ENCODE measurements at regions of chr10 and their contacts with region 1.

Region 1: GRCh38 chr10:122565728-122566206 is 5.2 kb downstream of the DMBT1 start:
- DNase-seq: peak; percentile 93
- H3K4me3 Mint-ChIP-seq: peak overlapping the region; percentile 68
- H3K27ac Mint-ChIP-seq: no peak overlapping the region
- H3K4me1 Mint-ChIP-seq: peaks cover 12% of the 10 kb centered on the region
- H3K27me3 Mint-ChIP-seq: no peaks in the 10 kb centered on the region
- CTCF ChIP-seq: peak; percentile 83

Region 2: GRCh38 chr10:122298598-122299301 is 267.0 kb before region 1 on chr10:
- CTCF ChIA-PET with region 1: interaction called, 25 read pairs
- POLR2A ChIA-PET with region 1: interaction called, 4 read pairs
- intact Hi-C with region 1: loop called (anchors 1 kb)
- DNase-seq: peak; percentile 86
- H3K4me3 Mint-ChIP-seq: no peak overlapping the region
- H3K27ac Mint-ChIP-seq: no peak overlapping the region
- H3K4me1 Mint-ChIP-seq: peaks cover 38% of the 10 kb centered on the region
- H3K27me3 Mint-ChIP-seq: no peaks in the 10 kb centered on the region
- CTCF ChIP-seq: peak; percentile 82

Region 3: DNA sequence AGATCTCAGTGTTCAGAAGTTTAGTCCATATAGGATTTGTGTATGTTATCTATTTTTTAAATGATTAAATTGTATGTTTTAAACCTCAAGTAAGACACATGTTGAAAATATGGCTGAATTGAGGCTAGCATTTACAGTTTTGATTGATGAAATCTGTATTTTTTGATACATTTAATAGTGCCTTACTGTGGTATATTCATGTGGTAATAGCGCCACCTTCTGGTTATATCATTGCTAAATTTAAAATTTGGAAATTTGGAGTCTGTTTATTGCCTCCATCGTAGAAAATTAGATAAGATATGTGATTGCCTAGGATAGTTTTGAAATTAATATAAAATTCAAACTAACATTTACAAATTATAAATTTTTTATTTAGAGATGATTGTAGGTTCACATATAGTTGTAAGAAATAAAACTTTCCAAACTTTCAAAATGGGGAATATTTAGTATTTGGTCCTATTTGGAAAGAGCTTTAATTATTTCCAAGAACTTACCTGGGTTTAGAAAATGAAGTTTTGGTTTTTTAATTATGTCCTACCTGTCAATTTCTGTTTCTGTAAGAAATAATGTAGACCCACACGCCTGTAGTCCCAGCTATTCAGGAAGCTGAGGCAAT is 130.4 kb before region 1 on chr10:
- CTCF ChIA-PET with region 1: interaction called, 23 read pairs
- POLR2A ChIA-PET with region 1: interaction called, 3 read pairs
- intact Hi-C with region 1: loop called (anchors 1 kb)
- DNase-seq: peak; percentile 55
- H3K4me3 Mint-ChIP-seq: no peak overlapping the region
- H3K27ac Mint-ChIP-seq: no peak overlapping the region
- H3K4me1 Mint-ChIP-seq: no peaks in the 10 kb centered on the region
- H3K27me3 Mint-ChIP-seq: no peaks in the 10 kb centered on the region
- CTCF ChIP-seq: peak; percentile 51

Region 4: DNA sequence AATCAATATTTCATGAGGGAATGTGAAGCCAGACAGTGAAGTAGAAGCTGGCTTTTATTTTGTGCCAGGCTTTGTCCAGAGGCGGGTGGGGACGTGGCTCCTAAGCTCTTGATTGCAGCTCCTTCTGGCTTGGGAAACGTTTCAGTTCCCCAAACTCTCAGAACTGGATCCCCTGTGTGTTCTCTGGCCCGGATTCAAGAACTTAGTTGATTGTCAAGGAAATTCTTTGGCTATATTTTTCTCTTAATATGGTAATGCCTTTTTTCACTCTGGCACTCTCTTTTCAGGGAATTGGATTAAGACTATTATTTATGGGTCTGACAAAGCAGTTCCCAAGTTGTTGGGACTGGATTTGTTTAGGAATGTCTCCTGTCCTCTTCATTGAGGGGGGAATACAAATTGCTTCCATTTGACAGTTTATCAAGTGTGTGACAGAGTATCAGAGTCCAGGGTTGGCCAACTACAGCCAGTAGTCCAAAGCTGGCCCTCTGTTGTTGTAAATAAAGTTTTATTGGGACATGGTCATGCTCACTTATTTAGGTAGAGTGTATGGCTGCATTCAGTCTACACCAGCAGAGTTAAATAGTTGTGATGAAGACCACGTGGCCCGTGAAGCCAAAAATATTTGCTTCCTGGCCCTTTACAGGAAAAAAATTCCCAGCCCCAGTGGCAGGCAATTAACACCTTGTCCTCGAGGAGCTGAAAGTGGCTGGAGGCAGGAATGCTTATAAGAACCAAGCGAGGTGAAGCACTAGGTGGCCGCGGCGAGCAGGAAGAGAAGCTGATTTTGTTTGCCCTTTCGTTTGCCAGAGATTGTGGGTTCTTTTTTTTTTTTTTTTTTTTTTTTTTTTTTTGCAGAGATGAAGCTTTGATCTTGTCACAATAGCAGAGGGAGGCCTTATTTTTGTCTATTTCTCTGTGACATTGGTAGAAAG is 70.1 kb before region 1 on chr10:
- CTCF ChIA-PET with region 1: interaction called, 24 read pairs
- POLR2A ChIA-PET with region 1: interaction called, 5 read pairs
- intact Hi-C with region 1: no loop called
- DNase-seq: peak; percentile 77
- H3K4me3 Mint-ChIP-seq: peak overlapping the region; percentile 60
- H3K27ac Mint-ChIP-seq: peak overlapping the region; percentile 92
- H3K4me1 Mint-ChIP-seq: peaks cover 71% of the 10 kb centered on the region
- H3K27me3 Mint-ChIP-seq: no peaks in the 10 kb centered on the region
- CTCF ChIP-seq: no peak

Region 5: DNA sequence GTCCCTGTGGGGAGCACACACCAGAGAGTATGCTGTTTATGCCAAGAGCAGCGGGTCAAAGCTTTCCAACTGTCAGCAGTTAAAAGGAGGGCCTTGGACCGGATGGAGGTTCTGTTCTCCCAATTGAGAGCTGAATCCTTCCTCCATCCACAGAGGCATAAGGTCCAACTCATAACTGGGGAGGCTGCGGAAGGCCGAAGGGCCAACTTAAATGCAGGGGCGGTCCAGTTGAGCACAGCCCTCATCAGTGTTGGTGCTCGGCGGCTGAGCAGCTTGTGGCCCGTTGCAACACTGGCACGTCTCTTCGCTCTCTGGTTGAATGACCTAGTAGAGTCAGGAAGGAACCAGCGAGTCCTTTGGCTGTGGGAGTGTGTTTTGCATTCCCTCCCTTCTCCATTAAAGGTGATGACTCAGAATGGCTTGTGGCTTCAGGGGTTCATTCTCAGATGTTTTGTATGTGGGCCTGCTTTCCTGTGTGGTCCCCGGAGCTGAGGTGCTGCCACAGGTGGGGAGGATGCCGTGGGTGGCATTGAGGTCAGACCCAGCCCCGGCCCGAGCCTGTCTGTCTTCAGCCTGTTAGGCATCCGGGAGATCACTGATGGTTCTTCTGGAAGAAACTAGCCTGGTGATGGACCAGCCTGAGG is 50.1 kb before region 1 on chr10:
- CTCF ChIA-PET with region 1: interaction called, 25 read pairs
- POLR2A ChIA-PET with region 1: interaction called, 7 read pairs
- intact Hi-C with region 1: loop called (anchors 5 kb)
- DNase-seq: peak; percentile 75
- H3K4me3 Mint-ChIP-seq: no peak overlapping the region
- H3K27ac Mint-ChIP-seq: no peak overlapping the region
- H3K4me1 Mint-ChIP-seq: peaks cover 12% of the 10 kb centered on the region
- H3K27me3 Mint-ChIP-seq: no peaks in the 10 kb centered on the region
- CTCF ChIP-seq: no peak

Region 6: DNA sequence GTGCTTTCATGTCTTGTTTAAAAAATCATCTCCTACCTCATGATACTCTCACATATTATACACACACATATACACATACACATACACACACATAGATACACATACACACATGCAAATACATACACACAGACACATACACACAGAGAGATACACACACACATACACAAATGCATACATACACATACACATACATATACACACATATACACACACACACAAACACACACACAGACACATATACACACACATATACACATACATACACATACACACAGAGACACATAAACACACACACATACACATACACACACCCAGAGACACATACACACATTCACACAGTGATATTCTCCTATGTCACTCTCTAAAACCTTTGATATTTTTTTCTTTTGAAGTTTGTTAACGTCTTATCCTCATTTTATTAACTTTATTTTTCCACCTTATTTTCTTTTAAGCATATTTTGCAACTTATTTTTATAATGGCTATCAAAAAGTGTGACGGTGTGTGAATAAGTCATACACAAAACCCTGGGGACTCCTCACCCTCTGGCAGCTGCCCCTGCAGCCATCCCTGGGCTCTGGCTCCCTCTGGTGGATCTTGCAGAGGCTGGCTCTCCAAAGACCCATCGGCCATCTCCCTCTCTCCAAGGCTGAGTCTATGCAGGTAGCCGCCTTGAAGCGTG is 137.8 kb after region 1 on chr10:
- CTCF ChIA-PET with region 1: interaction called, 12 read pairs
- POLR2A ChIA-PET with region 1: interaction called, 4 read pairs
- intact Hi-C with region 1: loop called (anchors 1 kb)
- DNase-seq: peak; percentile 80
- H3K4me3 Mint-ChIP-seq: no peak overlapping the region
- H3K27ac Mint-ChIP-seq: no peak overlapping the region
- H3K4me1 Mint-ChIP-seq: no peaks in the 10 kb centered on the region
- H3K27me3 Mint-ChIP-seq: no peaks in the 10 kb centered on the region
- CTCF ChIP-seq: peak; percentile 89

Measured in MCF 10A (cell line).